Endothelial cell of umbilical vein (primary cell): ENCODE measurements at regions of chr4 and their contacts with region 1.

Region 1: DNA sequence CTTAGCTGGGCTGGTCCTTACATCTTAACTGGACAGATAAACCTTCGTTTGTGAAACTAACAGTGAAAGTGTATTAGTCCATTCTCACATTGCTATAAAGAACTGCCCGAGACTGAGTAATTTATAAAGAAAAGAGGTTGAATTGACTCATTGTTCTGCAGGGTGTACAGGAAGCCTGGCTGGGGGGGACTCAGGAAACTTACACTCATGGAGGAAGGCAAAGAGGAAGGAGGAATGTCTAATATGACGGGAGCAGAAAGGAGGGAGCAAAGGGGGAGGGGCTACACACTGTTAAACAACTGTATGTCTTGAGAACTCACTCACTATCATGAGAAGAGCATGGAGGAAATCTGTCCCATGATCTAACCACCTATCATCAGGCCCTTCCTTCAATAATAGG is 1566.5 kb upstream of the PCDH7 start:
- DNase-seq: peak; percentile 97
- H3K4me3 ChIP-seq: peak overlapping the region in 1 of 3 experiments; percentile 50
- H3K27ac ChIP-seq: peak overlapping the region; percentile 90
- H3K4me1 ChIP-seq: peaks cover 16% of the 10 kb centered on the region
- H3K27me3 ChIP-seq: no peaks in the 10 kb centered on the region
- CTCF ChIP-seq: no peak
- POLR2A ChIP-seq: no peak

Region 2: GRCh38 chr4:29099707-29100106 is 53.9 kb before region 1 on chr4:
- CTCF ChIA-PET with region 1: no interaction called
- POLR2A ChIA-PET with region 1: no interaction called
- dilution Hi-C with region 1: no loop called
- intact Hi-C with region 1: loop called (anchors 1 kb)
- DNase-seq: no peak
- H3K4me3 ChIP-seq: no peak overlapping the region
- H3K27ac ChIP-seq: no peak overlapping the region
- H3K4me1 ChIP-seq: no peaks in the 10 kb centered on the region
- H3K27me3 ChIP-seq: no peaks in the 10 kb centered on the region
- CTCF ChIP-seq: no peak
- POLR2A ChIP-seq: no peak

Region 3: GRCh38 chr4:29142708-29143107 is 10.9 kb before region 1 on chr4:
- CTCF ChIA-PET with region 1: interaction called, 4 read pairs
- POLR2A ChIA-PET with region 1: no interaction called
- dilution Hi-C with region 1: no loop called
- intact Hi-C with region 1: loop called (anchors 1 kb)
- DNase-seq: no peak
- H3K4me3 ChIP-seq: no peak overlapping the region
- H3K27ac ChIP-seq: no peak overlapping the region
- H3K4me1 ChIP-seq: no peaks in the 10 kb centered on the region
- H3K27me3 ChIP-seq: no peaks in the 10 kb centered on the region
- CTCF ChIP-seq: no peak
- POLR2A ChIP-seq: no peak